ENCODE measurements at regions of chr5 and their contacts with region 1.

Region 1: DNA sequence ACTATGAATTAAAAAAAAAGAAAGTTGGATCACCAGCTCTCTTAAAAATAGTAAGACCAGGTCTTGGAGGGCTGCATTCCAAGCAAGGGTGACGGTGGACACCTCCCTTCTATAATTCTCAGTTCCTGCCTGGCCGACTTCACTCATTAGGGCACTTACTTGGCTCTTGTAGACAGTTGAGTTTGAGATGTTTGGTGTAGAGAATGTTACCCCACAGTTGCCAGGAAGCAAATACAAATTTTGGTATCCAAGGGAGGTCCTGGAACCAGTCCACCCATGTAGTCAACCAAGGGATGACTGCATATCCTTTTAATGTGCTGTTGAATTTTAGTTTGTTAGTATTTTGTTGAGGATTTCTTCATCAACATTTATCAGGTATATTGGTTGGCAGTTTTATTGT is 20.6 kb downstream of the B4GALT7 start:
- DNase-seq: no peak
- H3K4me3 Mint-ChIP-seq: no peak overlapping the region
- H3K27ac Mint-ChIP-seq: no peak overlapping the region
- H3K4me1 Mint-ChIP-seq: no peaks in the 10 kb centered on the region
- H3K27me3 Mint-ChIP-seq: no peaks in the 10 kb centered on the region
- CTCF ChIP-seq: no peak

Region 2: GRCh38 chr5:177382423-177383029 is 238.0 kb before region 1 on chr5:
- CTCF ChIA-PET with region 1: no interaction called
- POLR2A ChIA-PET with region 1: no interaction called
- intact Hi-C with region 1: no loop called
- DNase-seq: peak; percentile 47
- H3K4me3 Mint-ChIP-seq: no peak overlapping the region
- H3K27ac Mint-ChIP-seq: no peak overlapping the region
- H3K4me1 Mint-ChIP-seq: peaks cover 15% of the 10 kb centered on the region
- H3K27me3 Mint-ChIP-seq: peaks cover 18% of the 10 kb centered on the region
- CTCF ChIP-seq: no peak

Region 3: DNA sequence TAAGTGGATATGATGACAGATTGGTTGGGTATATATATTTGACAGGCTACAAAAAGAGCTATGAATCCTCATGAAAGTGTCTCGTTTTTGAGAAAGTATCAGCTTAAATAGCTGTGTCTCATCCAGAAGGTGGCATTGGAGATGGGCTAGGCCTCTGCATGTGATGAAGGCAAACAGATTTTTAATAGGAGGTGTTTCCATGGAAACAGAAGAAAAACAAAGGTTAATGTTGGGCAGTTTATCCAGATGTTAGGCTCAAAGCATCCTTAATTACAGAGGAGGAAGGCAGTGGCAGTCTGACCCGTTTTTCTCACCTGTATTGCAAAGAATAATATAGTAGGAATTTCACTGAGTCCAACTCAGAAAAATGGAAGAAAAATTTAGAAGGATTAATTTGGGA is 550.4 kb after region 1 on chr5:
- CTCF ChIA-PET with region 1: no interaction called
- POLR2A ChIA-PET with region 1: no interaction called
- intact Hi-C with region 1: loop called (anchors 5 kb)
- DNase-seq: no peak
- H3K4me3 Mint-ChIP-seq: no peak overlapping the region
- H3K27ac Mint-ChIP-seq: no peak overlapping the region
- H3K4me1 Mint-ChIP-seq: no peaks in the 10 kb centered on the region
- H3K27me3 Mint-ChIP-seq: no peaks in the 10 kb centered on the region
- CTCF ChIP-seq: no peak